PC-3 (cell line): ENCODE measurements at regions of chr18 and their contacts with region 1.

Region 1: DNA sequence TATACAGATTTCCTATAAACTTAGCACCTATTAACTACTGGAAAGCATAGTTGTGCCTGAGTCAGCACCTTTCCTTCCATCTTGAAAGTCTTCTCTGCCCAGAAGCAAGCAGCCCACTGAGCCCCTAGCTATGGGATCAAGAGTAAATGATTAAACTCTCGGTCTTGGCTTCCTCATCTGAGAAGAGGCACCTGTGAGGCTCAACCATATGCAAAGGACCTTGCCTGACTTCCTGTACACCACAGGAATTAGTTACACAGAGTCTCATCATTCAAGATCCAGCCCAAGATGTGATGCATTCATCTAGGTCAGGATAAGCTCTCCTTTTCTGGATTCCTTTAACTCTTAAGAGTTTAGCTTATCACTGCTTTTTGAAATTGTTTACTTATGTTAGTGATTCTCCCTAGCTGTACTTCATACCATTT is 96.0 kb downstream of the CDH2 start:
- DNase-seq: no peak
- ATAC-seq: no peak
- H3K4me3 ChIP-seq: no peak overlapping the region
- H3K27ac ChIP-seq: no peak overlapping the region
- H3K4me1 ChIP-seq: 0 out of 2 replicates have a peak, but pooled peaks cover under 1% of the 10 kb centered on the region
- H3K27me3 ChIP-seq: no peaks in the 10 kb centered on the region
- CTCF ChIP-seq: no peak

Region 2: DNA sequence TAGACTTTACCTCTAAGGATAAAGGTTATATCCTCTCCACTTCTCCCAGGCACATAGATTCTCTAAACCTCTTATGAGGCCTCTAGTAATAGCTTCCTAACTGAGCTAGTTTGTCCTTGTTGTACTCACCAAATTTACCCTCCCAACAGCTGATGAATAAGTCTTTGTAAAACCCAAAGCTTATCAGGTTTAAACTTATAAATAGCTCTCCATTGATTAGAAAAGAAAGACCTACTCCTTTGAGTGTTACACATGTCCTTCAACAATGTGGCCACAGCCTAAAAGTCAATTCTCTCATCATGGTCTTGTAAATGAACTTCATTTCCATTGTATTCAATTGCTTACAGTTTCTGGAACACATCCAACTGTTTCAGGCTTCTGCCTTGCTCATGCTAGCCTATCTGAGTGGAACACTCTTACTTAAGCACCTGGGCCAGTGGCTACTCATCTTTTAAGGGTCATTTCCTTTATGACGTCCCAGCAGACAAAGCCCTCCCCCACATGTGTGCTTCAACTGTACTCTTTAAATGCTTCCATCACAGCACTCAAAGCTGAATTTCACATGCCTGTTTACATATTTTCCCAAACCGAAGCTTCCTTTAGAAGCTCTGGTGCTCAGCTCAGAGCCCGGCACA is 35.6 kb before region 1 on chr18:
- CTCF ChIA-PET with region 1: no interaction called
- POLR2A ChIA-PET with region 1: interaction called, 6 read pairs
- intact Hi-C with region 1: loop called (anchors 5 kb)
- DNase-seq: peak; percentile 30
- ATAC-seq: no peak
- H3K4me3 ChIP-seq: no peak overlapping the region
- H3K27ac ChIP-seq: no peak overlapping the region
- H3K4me1 ChIP-seq: no peaks in the 10 kb centered on the region
- H3K27me3 ChIP-seq: no peaks in the 10 kb centered on the region
- CTCF ChIP-seq: no peak